ENCODE measurements at regions of chr15 and their contacts with region 1.

Region 1: GRCh38 chr15:99704444-99704838 is 28.8 kb downstream of the LYSMD4 start:
- DNase-seq: peak; percentile 78
- ATAC-seq: peak; percentile 65
- H3K4me3 ChIP-seq: no peak overlapping the region
- H3K27ac ChIP-seq: no peak overlapping the region
- H3K4me1 ChIP-seq: peaks cover 17 to 31% of the 10 kb centered on the region in 2 experiments
- H3K27me3 ChIP-seq: no peaks in the 10 kb centered on the region
- CTCF ChIP-seq: peak; percentile 60 to 83 (median 79); a peak in 5 of 6 replicates
- POLR2A ChIP-seq: no peak
- RAD21 ChIP-seq: peak; percentile 89

Region 2: DNA sequence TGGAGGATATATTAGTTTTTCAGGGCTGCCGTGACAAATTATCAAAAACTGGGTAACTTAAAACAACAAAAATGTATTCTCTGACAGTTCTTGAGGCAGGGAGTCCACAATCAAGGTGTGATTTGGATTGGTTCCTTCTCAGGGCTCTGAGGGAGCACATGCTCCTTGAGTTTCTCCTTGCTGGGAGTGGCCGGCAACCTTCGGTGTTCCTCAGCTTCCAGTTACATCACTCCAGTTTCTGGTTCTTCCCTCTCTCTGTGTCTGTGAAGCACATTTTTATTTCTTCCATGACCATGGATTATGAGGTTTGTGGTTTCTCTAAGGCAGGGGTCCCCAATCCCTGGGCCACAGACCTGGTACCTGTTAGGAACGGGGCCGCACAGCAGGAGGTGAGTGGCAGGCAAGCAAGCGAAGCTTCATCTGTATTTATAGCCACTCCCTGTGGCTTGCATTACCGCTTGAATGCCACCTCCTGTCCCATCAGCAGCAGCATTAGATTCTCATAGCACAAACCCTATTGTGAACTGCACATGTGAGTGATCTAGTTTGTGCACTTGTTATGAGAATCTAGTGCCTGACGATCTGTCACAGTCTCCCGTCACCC is 428.8 kb before region 1 on chr15:
- CTCF ChIA-PET with region 1: interaction called, 88 read pairs
- POLR2A ChIA-PET with region 1: interaction called, 6 read pairs
- RAD21 ChIA-PET with region 1: interaction called, 3 to 8 read pairs
- intact Hi-C with region 1: loop called (anchors 1 kb)
- DNase-seq: no peak
- ATAC-seq: no peak
- H3K4me3 ChIP-seq: no peak overlapping the region
- H3K27ac ChIP-seq: no peak overlapping the region
- H3K4me1 ChIP-seq: no peaks in the 10 kb centered on the region
- H3K27me3 ChIP-seq: no peaks in the 10 kb centered on the region
- CTCF ChIP-seq: no peak
- POLR2A ChIP-seq: no peak
- RAD21 ChIP-seq: no peak

Region 3: GRCh38 chr15:99409097-99409473 is 295.4 kb before region 1 on chr15:
- CTCF ChIA-PET with region 1: interaction called, 62 read pairs
- POLR2A ChIA-PET with region 1: interaction called, 6 read pairs
- RAD21 ChIA-PET with region 1: interaction called in 1 of 2 experiments, 12 read pairs
- intact Hi-C with region 1: loop called (anchors 1 kb)
- DNase-seq: peak; percentile 38
- ATAC-seq: peak; percentile 98
- H3K4me3 ChIP-seq: no peak overlapping the region
- H3K27ac ChIP-seq: no peak overlapping the region
- H3K4me1 ChIP-seq: peaks cover 0 to 8% of the 10 kb centered on the region in 2 experiments; a peak in 1 of 4 replicates
- H3K27me3 ChIP-seq: no peaks in the 10 kb centered on the region
- CTCF ChIP-seq: peak; percentile 59 to 75 (median 64); a peak in 5 of 6 replicates
- POLR2A ChIP-seq: no peak
- RAD21 ChIP-seq: peak; percentile 88

Region 4: DNA sequence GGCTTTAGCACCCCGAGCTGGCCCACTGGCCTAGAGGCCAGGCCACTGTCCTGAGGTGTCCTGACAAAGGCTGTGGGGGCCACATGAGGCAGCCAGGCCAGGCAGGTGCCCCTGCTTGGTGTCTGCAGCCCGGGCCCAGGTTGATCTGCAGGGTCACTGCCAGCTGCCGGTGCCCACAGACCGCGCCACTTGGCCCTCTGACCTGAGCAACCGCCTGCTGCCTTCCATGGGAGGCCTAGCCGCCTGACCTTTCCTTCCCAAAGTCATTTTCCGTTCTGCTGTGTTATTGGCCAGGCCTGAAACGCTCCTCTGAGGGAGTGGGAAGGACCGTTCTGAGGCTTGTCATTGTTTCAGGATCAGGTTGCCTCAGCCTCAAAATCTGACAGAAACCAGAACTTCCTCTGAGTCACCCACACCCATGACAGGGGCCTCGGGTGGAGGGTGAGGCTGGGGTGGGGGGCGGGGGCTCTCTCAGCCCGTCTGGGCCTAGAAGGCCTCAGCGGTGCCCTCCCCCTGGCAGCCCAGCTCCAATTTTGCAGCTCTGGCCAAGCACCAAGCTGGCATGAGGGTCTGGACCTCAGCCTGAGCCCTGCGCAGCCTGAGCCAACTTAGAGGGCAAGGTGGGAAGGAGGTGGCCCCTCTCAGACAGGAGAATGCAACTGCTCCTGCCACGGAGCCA is 279.3 kb before region 1 on chr15:
- CTCF ChIA-PET with region 1: interaction called, 7 read pairs
- POLR2A ChIA-PET with region 1: no interaction called
- RAD21 ChIA-PET with region 1: interaction called in 1 of 2 experiments, 7 read pairs
- intact Hi-C with region 1: loop called (anchors 5 kb)
- DNase-seq: no peak
- ATAC-seq: 0 out of 2 replicates have a peak, but pooled peaks have one; percentile 26
- H3K4me3 ChIP-seq: no peak overlapping the region
- H3K27ac ChIP-seq: no peak overlapping the region
- H3K4me1 ChIP-seq: peaks cover 3 to 14% of the 10 kb centered on the region in 2 experiments; a peak in 2 of 4 replicates
- H3K27me3 ChIP-seq: no peaks in the 10 kb centered on the region
- CTCF ChIP-seq: no peak
- POLR2A ChIP-seq: no peak
- RAD21 ChIP-seq: no peak

Region 5: GRCh38 chr15:99692825-99693224 is 11.6 kb before region 1 on chr15:
- CTCF ChIA-PET with region 1: interaction called, 12 read pairs
- POLR2A ChIA-PET with region 1: no interaction called
- RAD21 ChIA-PET with region 1: no interaction called
- intact Hi-C with region 1: no loop called
- DNase-seq: no peak
- ATAC-seq: no peak
- H3K4me3 ChIP-seq: no peak overlapping the region
- H3K27ac ChIP-seq: no peak overlapping the region
- H3K4me1 ChIP-seq: no peaks in the 10 kb centered on the region
- H3K27me3 ChIP-seq: no peaks in the 10 kb centered on the region
- CTCF ChIP-seq: no peak
- POLR2A ChIP-seq: no peak
- RAD21 ChIP-seq: no peak

Region 6: GRCh38 chr15:99733268-99734039 is 29.0 kb after region 1 on chr15 and contains the start of gene LYSMD4:
- CTCF ChIA-PET with region 1: interaction called, 19 read pairs
- POLR2A ChIA-PET with region 1: interaction called, 6 read pairs
- RAD21 ChIA-PET with region 1: interaction called in 1 of 2 experiments, 4 read pairs
- intact Hi-C with region 1: no loop called
- DNase-seq: peak; percentile 84
- ATAC-seq: peak; percentile 100
- H3K4me3 ChIP-seq: peak within 1 kb of the TSS; percentile 64 to 73
- H3K27ac ChIP-seq: peak within 1 kb of the TSS; percentile 59
- H3K4me1 ChIP-seq: peaks cover 3 to 13% of the 10 kb centered on the region in 2 experiments; a peak in 3 of 4 replicates
- H3K27me3 ChIP-seq: no peaks in the 10 kb centered on the region
- CTCF ChIP-seq: no peak
- POLR2A ChIP-seq: no peak
- RAD21 ChIP-seq: no peak
- total RNA-seq, gene LYSMD4: 8.6 TPM

Measured in HCT116 (cell line).